Cardiac septum (tissue), 1 donor: ENCODE measurements at regions of chr2 and their contacts with region 1.

Region 1: GRCh38 chr2:230913406-230914143 is 11.5 kb downstream of the GPR55 start:
- DNase-seq: peak; percentile 39

Region 2: GRCh38 chr2:230847883-230848388 is 65.6 kb before region 1 on chr2:
- intact Hi-C with region 1: loop called (anchors 5 kb)
- DNase-seq: peak; percentile 90

Region 3: DNA sequence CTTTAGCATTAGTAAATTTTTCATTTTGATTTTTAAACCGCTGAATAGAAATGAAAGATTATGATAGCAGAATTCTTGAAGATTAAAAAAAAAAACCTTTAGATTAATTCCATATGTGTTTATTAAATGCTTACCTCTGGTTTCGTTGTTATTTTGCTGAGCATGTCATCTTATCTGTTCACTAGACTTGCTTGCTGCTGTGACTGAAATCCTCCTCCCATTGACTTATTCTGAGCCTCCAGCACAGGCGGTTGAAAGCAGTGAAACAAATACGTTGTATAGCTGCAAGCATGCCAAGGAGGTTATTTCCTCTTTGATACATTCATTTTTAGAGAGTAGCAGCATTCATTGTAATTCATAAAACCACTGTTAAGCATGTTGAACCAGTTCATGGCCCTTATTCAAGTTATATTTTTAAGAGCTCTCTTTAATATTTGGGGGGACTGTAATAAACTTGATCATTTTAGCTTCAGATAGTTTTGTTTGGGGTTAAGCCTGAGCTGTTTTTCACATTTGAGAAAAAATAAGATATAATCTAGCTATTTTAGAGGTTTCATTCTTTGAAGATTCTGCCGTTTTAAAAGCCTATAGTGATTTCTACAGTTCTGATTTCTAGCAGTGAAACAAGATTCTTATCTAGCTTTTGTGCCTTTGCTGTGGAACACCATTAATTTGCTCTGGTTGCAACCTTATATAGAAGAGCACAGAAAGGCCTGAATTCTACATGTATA is 211.4 kb after region 1 on chr2 and contains the start of gene HTR2B:
- intact Hi-C with region 1: no loop called
- DNase-seq: no peak
- total RNA-seq, gene HTR2B: 2.9 TPM